KBM-7 (cell line): ENCODE measurements at regions of chr3 and their contacts with region 1.

Region 1: DNA sequence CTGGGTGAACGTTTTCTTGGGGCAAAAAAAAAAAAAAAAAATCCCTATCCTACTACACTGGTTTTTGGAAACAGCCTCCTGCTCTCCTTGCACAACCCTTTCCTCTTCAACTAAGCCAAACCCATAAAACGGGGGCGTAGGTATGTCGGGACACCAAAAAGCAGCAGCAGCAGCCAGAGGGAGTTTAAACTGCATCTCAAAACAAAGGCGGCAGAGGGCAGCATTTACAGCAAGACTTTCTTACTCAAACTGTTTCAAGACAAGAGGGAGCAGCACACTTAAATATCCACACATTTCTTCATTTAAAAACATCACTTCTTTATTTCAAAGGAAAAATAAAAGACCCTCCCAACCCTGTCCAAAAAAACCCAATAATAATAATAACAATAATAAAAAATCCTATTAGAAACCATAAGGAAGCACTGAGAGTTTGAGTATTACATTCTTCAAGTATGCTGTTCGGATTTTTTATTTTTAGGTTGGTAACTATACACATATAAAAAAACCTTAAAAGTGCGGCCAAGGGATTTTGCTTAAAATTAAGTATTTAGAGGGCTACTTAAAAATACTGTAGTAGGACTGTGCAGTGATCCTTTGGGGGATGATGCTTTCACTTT is 43.9 kb upstream of the PLXND1 start:
- DNase-seq: peak; percentile 86

Region 2: GRCh38 chr3:129824926-129825541 is 174.7 kb after region 1 on chr3:
- in situ Hi-C with region 1: loop called (anchors 10 kb)
- DNase-seq: peak; percentile 65